Naive thymus-derived CD4-positive, alpha-beta T cell (primary cell): ENCODE measurements at regions of chr3 and their contacts with region 1.

Region 1: GRCh38 chr3:141255846-141256261 is 24.2 kb downstream of the PXYLP1 start:
- DNase-seq: peak in 7 of 9 donors; percentile 54 to 76 (median 67)
- ATAC-seq: peak; percentile 91
- H3K4me3 ChIP-seq: no peak overlapping the region
- H3K4me3 Mint-ChIP-seq: peak overlapping the region in 8 of 10 donors; percentile 38 to 62 (median 52)
- H3K27ac ChIP-seq: peak overlapping the region; percentile 28
- H3K27ac Mint-ChIP-seq: peak overlapping the region; percentile 38 to 92 (median 79)
- H3K4me1 ChIP-seq: peaks cover 0 to 12% of the 10 kb centered on the region in 2 donors
- H3K4me1 Mint-ChIP-seq: peaks cover 16 to 88% (median 45%) of the 10 kb centered on the region in 7 donors
- H3K27me3 ChIP-seq: no peaks in the 10 kb centered on the region
- H3K27me3 Mint-ChIP-seq: no peaks in the 10 kb centered on the region

Region 2: DNA sequence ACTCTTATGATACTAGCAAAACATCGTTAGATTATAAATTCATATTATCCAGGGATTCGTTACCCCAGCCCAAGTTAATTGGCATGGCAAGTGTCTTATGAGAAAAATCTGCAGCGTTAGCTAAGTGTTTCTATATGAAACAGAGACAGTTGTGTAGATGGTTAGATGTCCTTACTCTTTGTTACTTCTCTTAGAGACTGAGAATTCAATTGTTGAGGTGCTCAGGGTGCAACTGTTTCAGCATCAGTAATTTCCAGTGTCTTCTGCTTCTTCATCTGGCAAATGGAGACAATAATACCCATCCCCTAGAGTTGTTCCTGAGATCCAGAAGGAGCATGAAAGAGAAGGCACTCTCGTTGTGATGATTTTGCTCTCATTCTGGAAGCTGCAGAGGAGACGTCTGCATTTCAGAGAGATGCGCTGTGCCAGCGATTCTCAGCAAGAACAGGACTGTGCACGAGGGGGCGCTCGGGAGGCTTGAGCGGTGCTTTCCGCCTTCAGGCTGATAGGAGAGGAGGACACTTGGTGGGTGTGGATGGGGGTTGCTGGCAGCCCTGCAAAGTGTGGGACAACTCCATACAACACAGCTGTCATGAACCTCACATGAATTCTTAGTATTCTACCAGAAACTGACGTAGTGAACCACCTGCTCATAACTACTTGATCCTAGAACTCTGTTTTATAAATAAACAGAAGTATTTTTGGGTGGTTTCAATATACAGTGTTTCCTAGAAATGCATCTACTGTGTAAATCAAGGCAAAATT is 244.4 kb before region 1 on chr3:
- CTCF ChIA-PET with region 1: no interaction called
- POLR2A ChIA-PET with region 1: no interaction called
- intact Hi-C with region 1: loop called in 1 of 2 experiments (anchors 5 kb)
- DNase-seq: peak; percentile 40 to 74 (median 64)
- ATAC-seq: peak; percentile 98
- H3K4me3 ChIP-seq: no peak overlapping the region
- H3K4me3 Mint-ChIP-seq: no peak overlapping the region
- H3K27ac ChIP-seq: no peak overlapping the region
- H3K27ac Mint-ChIP-seq: no peak overlapping the region
- H3K4me1 ChIP-seq: peaks cover 0 to 3% of the 10 kb centered on the region in 2 donors
- H3K4me1 Mint-ChIP-seq: peaks cover 0 to 7% (median 5%) of the 10 kb centered on the region in 7 donors
- H3K27me3 ChIP-seq: peaks cover 0 to 4% of the 10 kb centered on the region in 2 donors
- H3K27me3 Mint-ChIP-seq: peaks cover 16 to 52% (median 25%) of the 10 kb centered on the region in 5 donors

Region 3: DNA sequence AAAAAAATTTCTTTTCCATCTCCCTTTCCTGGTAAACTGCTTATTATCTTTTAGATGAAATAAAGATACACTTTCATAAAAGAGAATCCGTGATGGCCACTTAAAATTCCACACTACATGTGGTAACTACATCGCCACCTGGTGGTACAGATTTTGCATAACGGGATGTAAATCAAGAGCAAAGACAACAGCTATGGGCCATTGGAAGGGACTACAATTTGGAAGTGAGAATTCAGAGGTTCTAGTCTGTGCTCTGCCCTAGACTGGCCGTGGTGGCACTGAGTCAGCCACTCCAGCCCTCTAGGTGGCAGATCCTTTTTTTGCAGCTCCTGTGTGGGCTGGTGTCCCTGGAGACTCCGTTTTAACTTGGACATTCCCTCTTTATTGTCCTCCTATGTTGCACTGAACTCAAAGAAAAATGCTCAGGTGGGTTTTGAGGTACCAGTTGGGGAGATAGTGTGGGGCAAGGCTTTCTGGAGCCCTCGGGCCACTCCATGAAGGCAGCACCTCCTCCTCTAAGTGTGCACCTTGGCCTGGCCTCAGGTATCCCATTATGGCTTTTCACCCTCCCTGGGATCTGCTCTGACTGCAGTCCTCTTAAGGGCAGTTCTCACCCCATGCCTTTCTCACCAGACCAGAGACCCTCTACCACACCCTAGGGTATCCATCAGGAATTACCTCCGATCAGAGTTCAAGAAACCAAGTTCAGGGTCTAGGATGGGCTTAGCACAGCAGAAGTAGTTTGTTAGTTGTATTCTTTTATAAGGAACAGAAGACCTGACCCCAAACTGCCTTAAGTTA is 149.8 kb before region 1 on chr3:
- CTCF ChIA-PET with region 1: no interaction called
- POLR2A ChIA-PET with region 1: no interaction called
- intact Hi-C with region 1: loop called in 1 of 2 experiments (anchors 5 kb)
- DNase-seq: peak in 8 of 9 donors; percentile 21 to 61 (median 50)
- ATAC-seq: peak; percentile 72
- H3K4me3 ChIP-seq: no peak overlapping the region
- H3K4me3 Mint-ChIP-seq: no peak overlapping the region
- H3K27ac ChIP-seq: no peak overlapping the region
- H3K27ac Mint-ChIP-seq: no peak overlapping the region
- H3K4me1 ChIP-seq: no peaks in the 10 kb centered on the region
- H3K4me1 Mint-ChIP-seq: peaks cover 0 to 5% (median 0%) of the 10 kb centered on the region in 7 donors
- H3K27me3 ChIP-seq: no peaks in the 10 kb centered on the region
- H3K27me3 Mint-ChIP-seq: peaks cover 0 to 6% (median 0%) of the 10 kb centered on the region in 5 donors

Region 4: DNA sequence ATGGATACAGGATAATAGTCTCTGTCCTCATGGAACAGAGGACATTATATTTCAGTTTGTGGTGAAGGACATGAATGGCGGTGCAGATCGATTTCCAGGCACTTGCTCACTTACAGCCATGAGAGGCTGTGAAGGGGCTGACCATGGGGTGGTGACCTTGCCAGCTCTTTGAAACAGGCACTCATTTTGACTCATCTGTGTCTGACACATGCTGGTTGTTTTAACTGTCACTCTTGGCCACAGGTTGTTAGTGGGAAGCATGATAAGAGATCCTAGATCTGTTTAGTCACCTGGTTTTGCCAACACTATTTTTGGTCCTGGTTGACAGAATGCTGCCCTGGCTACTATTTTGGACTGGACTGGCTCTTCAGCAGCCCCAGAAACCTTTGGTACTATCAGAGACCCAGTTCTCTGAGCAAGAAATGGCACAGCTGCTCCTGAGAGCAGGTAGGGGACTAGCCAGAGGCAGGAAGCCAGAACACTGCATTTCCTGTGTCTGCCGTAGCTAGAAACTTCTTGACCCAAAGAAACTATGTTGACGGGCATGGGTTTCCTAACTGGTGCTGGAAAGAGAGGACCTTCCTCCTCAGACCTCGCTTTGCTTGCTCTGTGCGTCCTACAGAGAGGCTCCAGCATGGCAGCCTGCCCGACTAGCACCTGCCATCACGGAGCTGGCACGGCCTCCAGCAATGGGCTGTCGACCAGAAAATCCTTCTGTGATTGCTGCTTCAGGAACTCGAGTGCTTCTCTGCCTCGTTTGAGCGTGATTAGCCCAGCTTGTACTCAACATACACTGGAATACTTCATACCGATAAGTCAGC is 17.9 kb before region 1 on chr3:
- CTCF ChIA-PET with region 1: interaction called, 82 read pairs
- POLR2A ChIA-PET with region 1: interaction called, 516 read pairs
- intact Hi-C with region 1: loop called (anchors 1 to 2 kb)
- DNase-seq: peak in 5 of 9 donors; percentile 18 to 27 (median 25)
- ATAC-seq: peak; percentile 30
- H3K4me3 ChIP-seq: peak overlapping the region; percentile 4
- H3K4me3 Mint-ChIP-seq: peak overlapping the region; percentile 57 to 92 (median 72)
- H3K27ac ChIP-seq: peak overlapping the region; percentile 66
- H3K27ac Mint-ChIP-seq: peak overlapping the region; percentile 70 to 93 (median 90)
- H3K4me1 ChIP-seq: peaks cover 9 to 63% of the 10 kb centered on the region in 2 donors
- H3K4me1 Mint-ChIP-seq: peaks cover 57 to 100% (median 93%) of the 10 kb centered on the region in 7 donors
- H3K27me3 ChIP-seq: no peaks in the 10 kb centered on the region
- H3K27me3 Mint-ChIP-seq: no peaks in the 10 kb centered on the region

Region 5: GRCh38 chr3:141243271-141243707 is 12.6 kb before region 1 on chr3:
- CTCF ChIA-PET with region 1: interaction called, 31 read pairs
- POLR2A ChIA-PET with region 1: interaction called, 516 read pairs
- intact Hi-C with region 1: loop called (anchors 1 to 2 kb)
- DNase-seq: peak in 8 of 9 donors; percentile 54 to 79 (median 66)
- ATAC-seq: peak; percentile 94
- H3K4me3 ChIP-seq: peak overlapping the region; percentile 15
- H3K4me3 Mint-ChIP-seq: peak overlapping the region; percentile 55 to 83 (median 65)
- H3K27ac ChIP-seq: peak overlapping the region; percentile 62
- H3K27ac Mint-ChIP-seq: peak overlapping the region; percentile 42 to 89 (median 86)
- H3K4me1 ChIP-seq: peaks cover 6 to 34% of the 10 kb centered on the region in 2 donors
- H3K4me1 Mint-ChIP-seq: peaks cover 25 to 85% (median 55%) of the 10 kb centered on the region in 7 donors
- H3K27me3 ChIP-seq: no peaks in the 10 kb centered on the region
- H3K27me3 Mint-ChIP-seq: no peaks in the 10 kb centered on the region

Region 6: DNA sequence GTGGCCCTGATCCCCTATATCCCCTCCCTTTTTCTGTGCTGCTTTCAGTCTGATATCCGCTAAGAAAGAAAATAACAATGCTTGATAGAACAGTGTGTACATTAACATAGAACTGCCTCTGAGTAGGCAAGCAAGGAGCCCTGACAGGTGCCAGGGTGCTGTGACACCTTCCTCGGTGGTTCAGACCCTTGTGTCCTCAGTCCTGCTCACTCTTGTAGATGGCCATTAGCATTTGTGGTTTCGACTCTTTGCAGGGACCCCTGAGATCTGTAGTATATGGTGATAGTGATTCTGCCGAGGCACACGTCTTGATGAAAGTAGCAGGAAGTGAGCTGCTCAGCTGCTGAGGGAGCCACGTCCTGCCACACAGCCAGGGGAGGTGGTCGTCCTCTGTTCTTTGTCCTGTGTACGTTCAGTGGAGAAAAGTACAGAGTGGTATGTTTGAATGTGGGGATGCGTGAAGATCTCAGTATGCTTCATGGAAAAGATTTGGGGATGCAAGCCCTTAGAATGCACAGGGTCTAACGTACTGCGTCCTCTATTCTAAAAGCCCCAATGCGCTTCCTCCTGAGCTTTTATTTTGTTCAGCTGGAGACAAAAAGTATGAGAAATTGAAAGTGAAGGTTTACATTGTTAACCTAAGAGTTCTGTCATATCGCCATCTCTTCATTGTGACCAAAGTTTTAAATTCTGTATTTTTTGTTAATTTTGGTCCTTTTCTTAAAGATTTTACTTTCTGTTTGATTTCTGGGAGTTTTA is 11.1 kb after region 1 on chr3:
- CTCF ChIA-PET with region 1: interaction called, 14 read pairs
- POLR2A ChIA-PET with region 1: interaction called, 516 read pairs
- intact Hi-C with region 1: loop called in 1 of 2 experiments (anchors 1 kb)
- DNase-seq: peak in 8 of 9 donors; percentile 20 to 82 (median 72)
- ATAC-seq: peak; percentile 85
- H3K4me3 ChIP-seq: peak overlapping the region; percentile 73
- H3K4me3 Mint-ChIP-seq: peak overlapping the region; percentile 84 to 92 (median 88)
- H3K27ac ChIP-seq: peak overlapping the region; percentile 77
- H3K27ac Mint-ChIP-seq: peak overlapping the region; percentile 91 to 99 (median 96)
- H3K4me1 ChIP-seq: peaks cover 0 to 35% of the 10 kb centered on the region in 2 donors
- H3K4me1 Mint-ChIP-seq: peaks cover 32 to 87% (median 39%) of the 10 kb centered on the region in 7 donors
- H3K27me3 ChIP-seq: no peaks in the 10 kb centered on the region
- H3K27me3 Mint-ChIP-seq: no peaks in the 10 kb centered on the region

Region 7: DNA sequence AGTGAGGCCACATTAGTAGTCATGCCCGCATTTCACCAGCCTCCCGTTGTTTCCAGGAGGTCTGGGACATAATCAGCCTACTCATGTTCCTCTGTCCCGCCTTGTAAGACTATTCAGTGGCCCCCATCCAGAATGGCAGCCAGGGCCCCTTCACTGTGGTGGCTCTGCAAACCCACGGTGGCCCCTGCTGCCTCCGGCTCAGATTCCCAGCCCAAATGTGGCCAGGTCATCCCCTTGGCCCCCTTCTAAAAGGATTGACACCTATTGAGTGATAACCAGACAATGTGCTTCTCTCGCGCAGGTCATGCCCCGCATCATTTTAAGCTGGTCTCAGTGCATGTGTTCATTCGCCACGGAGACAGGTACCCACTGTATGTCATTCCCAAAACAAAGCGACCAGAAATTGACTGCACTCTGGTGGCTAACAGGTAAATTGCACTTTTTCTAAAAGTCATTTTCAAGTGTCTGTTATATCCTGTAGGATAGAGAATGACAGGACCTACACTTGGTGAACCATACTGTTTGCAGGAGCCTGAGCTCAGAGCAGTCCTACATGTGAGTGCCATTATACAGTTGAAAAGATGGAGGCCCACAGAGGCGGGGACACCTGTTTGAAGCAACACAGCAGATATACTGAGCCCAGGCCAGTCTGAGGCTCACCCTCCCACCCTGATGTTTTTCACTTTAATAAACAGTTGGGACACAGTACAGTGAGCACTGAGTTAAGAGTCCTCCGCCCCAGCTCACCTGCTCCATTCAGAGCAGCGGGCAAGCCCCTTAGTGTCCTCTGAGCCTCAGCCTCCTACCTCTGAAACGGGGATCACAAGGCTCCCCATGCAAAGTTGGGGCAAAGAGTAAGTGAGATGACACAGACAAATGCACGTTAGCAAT is 23.5 kb after region 1 on chr3:
- CTCF ChIA-PET with region 1: no interaction called
- POLR2A ChIA-PET with region 1: interaction called, 516 read pairs
- intact Hi-C with region 1: loop called (anchors 1 to 2 kb)
- DNase-seq: peak in 7 of 9 donors; percentile 23 to 58 (median 46)
- ATAC-seq: peak; percentile 82
- H3K4me3 ChIP-seq: no peak overlapping the region
- H3K4me3 Mint-ChIP-seq: peak overlapping the region in 1 of 10 donors; percentile 17
- H3K27ac ChIP-seq: no peak overlapping the region
- H3K27ac Mint-ChIP-seq: peak overlapping the region in 6 of 9 donors; percentile 1 to 83 (median 44)
- H3K4me1 ChIP-seq: peaks cover 10 to 19% of the 10 kb centered on the region in 2 donors
- H3K4me1 Mint-ChIP-seq: peaks cover 14 to 36% (median 21%) of the 10 kb centered on the region in 7 donors
- H3K27me3 ChIP-seq: no peaks in the 10 kb centered on the region
- H3K27me3 Mint-ChIP-seq: no peaks in the 10 kb centered on the region